Activated B cell treated with CpG ODN at 0.5 μM for 24 hours (primary cell): ENCODE measurements at regions of chr6 and their contacts with region 1.

Region 1: DNA sequence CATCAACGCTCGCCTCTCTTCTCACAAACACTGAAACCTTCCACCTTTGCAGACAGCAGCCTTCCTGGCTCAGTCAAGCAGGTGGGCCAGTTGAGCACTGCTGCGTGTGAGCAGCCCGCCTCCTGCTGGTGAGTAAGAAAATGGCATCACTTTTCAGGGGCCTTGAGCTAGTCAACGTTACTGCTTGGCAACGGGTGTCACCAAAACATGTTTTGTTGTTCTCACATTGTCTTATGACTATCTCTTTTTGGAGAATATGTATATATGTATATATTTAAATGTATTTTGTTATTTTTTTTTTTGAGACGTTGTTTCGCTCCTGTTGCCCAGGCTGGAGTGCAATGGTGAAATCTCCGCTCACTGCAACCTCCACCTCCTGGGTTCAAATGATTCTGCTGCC is 97.0 kb upstream of the AGPAT4 start:
- DNase-seq: peak; percentile 27
- ATAC-seq: peak; percentile 87
- H3K4me3 Mint-ChIP-seq: no peak overlapping the region
- H3K27ac Mint-ChIP-seq: no peak overlapping the region
- H3K4me1 Mint-ChIP-seq: no peaks in the 10 kb centered on the region
- H3K27me3 Mint-ChIP-seq: no peaks in the 10 kb centered on the region
- CTCF ChIP-seq: peak; percentile 42

Region 2: GRCh38 chr6:159862103-159862502 is 1508.8 kb before region 1 on chr6:
- CTCF ChIA-PET with region 1: no interaction called
- POLR2A ChIA-PET with region 1: no interaction called
- intact Hi-C with region 1: loop called (anchors 5 kb)
- DNase-seq: no peak
- ATAC-seq: no peak
- H3K4me3 Mint-ChIP-seq: no peak overlapping the region
- H3K27ac Mint-ChIP-seq: no peak overlapping the region
- H3K4me1 Mint-ChIP-seq: no peaks in the 10 kb centered on the region
- H3K27me3 Mint-ChIP-seq: peaks cover 21% of the 10 kb centered on the region
- CTCF ChIP-seq: no peak

Region 3: DNA sequence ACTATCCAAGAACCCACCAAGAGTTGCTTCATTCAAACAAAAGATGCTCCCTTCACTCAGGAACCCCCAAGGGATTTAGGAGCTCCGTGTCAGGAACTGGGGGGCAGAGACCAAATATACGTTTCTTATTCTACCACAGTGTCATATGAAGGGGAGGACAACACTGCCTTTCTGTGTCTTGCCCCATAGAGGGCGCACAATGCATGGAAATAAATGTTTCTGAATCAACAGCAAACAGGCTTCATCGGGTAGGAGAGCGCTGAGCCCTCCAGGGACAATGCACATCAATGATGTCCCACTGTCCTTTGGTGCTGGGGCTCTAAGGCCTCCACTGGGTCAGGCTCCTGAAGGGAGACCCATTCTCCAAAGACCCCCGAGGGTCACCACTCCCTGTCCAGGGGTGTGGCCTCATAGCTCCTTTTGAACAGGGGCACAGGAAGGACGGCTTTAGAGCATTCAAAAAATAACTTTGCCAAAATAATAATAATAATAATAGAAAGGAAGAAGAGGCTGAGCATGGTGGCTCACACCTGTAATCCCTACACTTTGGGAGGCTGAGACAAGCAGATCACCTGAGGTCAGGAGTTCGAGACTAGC is 637.7 kb before region 1 on chr6:
- CTCF ChIA-PET with region 1: interaction called, 24 read pairs
- POLR2A ChIA-PET with region 1: no interaction called
- intact Hi-C with region 1: loop called (anchors 1 kb)
- DNase-seq: no peak
- ATAC-seq: peak; percentile 78
- H3K4me3 Mint-ChIP-seq: no peak overlapping the region
- H3K27ac Mint-ChIP-seq: no peak overlapping the region
- H3K4me1 Mint-ChIP-seq: no peaks in the 10 kb centered on the region
- H3K27me3 Mint-ChIP-seq: peaks cover 25% of the 10 kb centered on the region
- CTCF ChIP-seq: no peak

Region 4: GRCh38 chr6:160930547-160931377 is 440.1 kb before region 1 on chr6:
- CTCF ChIA-PET with region 1: interaction called, 139 read pairs
- POLR2A ChIA-PET with region 1: no interaction called
- intact Hi-C with region 1: loop called (anchors 1 kb)
- DNase-seq: peak; percentile 39
- ATAC-seq: no peak
- H3K4me3 Mint-ChIP-seq: no peak overlapping the region
- H3K27ac Mint-ChIP-seq: no peak overlapping the region
- H3K4me1 Mint-ChIP-seq: peaks cover 4% of the 10 kb centered on the region
- H3K27me3 Mint-ChIP-seq: peaks cover 33% of the 10 kb centered on the region
- CTCF ChIP-seq: no peak

Region 5: DNA sequence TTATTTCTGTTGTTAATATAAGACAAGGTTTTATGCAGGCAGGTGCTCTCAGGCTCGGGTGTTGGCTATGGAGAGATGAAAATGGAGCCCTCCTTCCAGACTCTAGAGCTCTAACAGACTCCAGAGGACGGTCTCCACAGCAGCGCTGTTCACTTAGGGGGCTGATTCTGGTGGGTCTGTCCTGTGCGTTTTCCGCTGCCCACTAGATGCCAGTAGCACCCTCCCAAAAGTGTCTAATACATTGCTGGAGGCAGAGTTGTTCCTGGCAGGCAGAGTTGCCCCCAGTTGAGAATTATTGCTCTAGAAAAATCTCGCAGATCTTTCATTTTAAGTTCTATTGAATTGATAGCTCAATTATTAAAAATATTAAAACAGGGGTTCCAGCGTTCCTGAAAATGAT is 269.4 kb before region 1 on chr6:
- CTCF ChIA-PET with region 1: interaction called, 8 read pairs
- POLR2A ChIA-PET with region 1: no interaction called
- intact Hi-C with region 1: loop called (anchors 1 kb)
- DNase-seq: no peak
- ATAC-seq: no peak
- H3K4me3 Mint-ChIP-seq: no peak overlapping the region
- H3K27ac Mint-ChIP-seq: no peak overlapping the region
- H3K4me1 Mint-ChIP-seq: no peaks in the 10 kb centered on the region
- H3K27me3 Mint-ChIP-seq: no peaks in the 10 kb centered on the region
- CTCF ChIP-seq: no peak

Region 6: DNA sequence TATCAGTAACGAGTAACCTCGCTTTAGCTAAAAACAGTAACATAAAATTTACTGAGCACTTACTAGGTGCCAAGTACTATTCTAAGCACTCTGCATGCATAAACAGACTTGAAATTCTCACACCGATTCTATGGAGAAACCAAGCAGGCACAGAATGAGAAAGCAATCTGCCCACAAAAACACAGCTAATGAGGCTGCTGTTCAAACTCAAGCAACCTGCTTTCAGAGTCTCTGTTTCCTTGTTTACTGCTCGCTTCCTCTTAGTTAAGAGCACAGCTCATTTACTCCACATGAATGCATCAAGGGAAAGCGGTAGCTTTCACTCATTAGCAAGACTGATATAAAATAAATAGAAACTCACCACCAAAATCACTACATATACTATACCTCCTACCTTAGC is 1319.3 kb after region 1 on chr6:
- CTCF ChIA-PET with region 1: no interaction called
- POLR2A ChIA-PET with region 1: no interaction called
- intact Hi-C with region 1: no loop called
- DNase-seq: no peak
- ATAC-seq: no peak
- H3K4me3 Mint-ChIP-seq: no peak overlapping the region
- H3K27ac Mint-ChIP-seq: no peak overlapping the region
- H3K4me1 Mint-ChIP-seq: no peaks in the 10 kb centered on the region
- H3K27me3 Mint-ChIP-seq: no peaks in the 10 kb centered on the region
- CTCF ChIP-seq: no peak